Activated CD4-positive, alpha-beta T cell treated with anti-CD3 and anti-CD28 coated beads for 36 hours (primary cell): ENCODE measurements at regions of chr6 and their contacts with region 1.

Region 1: DNA sequence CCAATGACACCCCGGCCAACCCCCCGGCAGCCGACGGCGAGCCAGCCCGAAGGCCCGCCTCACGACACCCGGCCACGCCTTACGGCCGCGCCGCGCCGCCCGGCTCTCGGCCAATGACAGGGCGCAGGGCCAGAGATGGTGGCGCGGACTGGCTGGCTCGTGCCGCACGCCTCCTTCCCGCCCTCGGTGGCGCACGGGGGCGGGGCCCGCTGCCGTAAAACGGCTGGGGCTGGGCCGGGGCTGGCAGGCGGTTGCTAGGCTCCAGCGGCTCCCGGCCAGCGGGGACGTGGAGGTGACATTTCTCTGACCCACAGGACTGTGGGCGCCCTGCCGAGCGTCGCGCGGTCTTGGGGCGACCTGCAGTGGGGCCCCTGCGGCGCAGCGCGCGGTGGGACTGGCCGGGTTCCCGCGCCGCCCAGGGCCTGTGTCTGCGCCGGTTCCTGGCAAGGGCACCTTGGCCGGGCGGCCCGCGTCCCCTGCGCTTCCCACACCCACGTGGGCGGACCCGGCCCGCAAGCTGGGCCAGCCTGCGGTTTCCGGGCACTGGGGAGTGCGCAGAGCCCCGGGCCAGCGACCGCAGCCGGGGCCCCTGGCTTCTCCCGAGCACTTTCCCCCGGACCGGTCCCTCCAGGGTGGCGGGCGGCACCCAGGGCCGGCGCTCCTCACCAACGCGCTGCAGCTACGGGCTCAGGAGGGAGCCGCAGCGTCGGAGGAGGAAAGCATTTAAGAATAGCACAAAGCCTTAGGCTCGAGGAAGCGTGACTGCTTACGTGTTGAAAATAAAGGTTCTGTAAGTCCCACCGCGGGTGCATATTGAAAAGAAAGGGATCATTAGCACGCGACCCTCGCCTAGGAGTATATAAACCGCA is at the start of gene MPC1:
- DNase-seq: peak; percentile 97
- ATAC-seq: peak; percentile 95
- H3K4me3 Mint-ChIP-seq: peak within 1 kb of the TSS; percentile 86
- H3K27ac Mint-ChIP-seq: peak within 1 kb of the TSS; percentile 75
- H3K4me1 Mint-ChIP-seq: peaks cover 4% of the 10 kb centered on the region
- H3K27me3 Mint-ChIP-seq: no peaks in the 10 kb centered on the region
- total RNA-seq, gene MPC1: 17.7 to 20.5 TPM

Region 2: GRCh38 chr6:166266336-166266735 is 116.8 kb before region 1 on chr6:
- CTCF ChIA-PET with region 1: no interaction called
- POLR2A ChIA-PET with region 1: no interaction called
- intact Hi-C with region 1: no loop called
- DNase-seq: no peak
- ATAC-seq: no peak
- H3K4me3 Mint-ChIP-seq: no peak overlapping the region
- H3K27ac Mint-ChIP-seq: no peak overlapping the region
- H3K4me1 Mint-ChIP-seq: no peaks in the 10 kb centered on the region
- H3K27me3 Mint-ChIP-seq: no peaks in the 10 kb centered on the region

Region 3: DNA sequence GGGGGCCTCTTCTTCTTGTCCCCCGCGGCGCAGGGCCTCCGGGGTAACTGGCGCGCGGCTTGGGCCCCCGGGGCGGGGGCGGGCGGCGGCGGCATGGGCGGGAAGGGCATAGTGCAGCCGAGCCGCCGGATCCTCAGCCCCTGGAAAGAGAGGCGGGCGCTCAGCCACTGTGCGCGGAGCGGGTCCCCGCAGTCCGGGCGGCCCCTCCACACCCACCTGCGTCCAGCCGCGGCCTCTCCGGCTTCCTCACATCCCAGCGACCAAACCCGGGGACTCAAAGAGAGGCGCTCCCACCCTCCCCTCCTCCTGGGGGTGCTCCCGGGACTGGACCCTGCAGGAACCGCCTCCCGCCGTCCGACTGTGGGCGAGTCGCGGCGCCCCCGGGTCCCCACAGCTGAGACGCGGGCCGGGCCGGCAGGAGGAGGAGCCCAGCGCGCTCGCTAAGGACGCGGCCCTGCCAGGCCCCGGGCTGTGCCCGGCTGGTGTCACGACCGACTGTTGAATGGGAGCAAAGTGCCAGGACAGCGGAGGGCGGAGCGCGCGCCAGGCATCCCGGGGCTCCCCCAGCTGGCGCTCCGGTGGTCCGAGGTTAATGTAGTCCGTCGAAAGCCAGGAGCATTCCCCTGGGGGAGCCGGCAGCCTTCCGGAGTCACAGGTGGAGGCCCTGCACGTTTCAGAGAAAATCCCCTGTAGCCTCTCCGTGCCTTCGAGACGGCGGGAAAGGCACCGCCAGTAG is 75.0 kb before region 1 on chr6 and contains the start of gene PRR18:
- CTCF ChIA-PET with region 1: interaction called, 27 read pairs
- POLR2A ChIA-PET with region 1: no interaction called
- intact Hi-C with region 1: loop called (anchors 1 kb)
- DNase-seq: peak; percentile 34
- ATAC-seq: peak; percentile 43
- H3K4me3 Mint-ChIP-seq: peak within 1 kb of the TSS; percentile 36
- H3K27ac Mint-ChIP-seq: no peak within 1 kb of the TSS
- H3K4me1 Mint-ChIP-seq: peaks cover 3% of the 10 kb centered on the region
- H3K27me3 Mint-ChIP-seq: peaks cover 27% of the 10 kb centered on the region
- total RNA-seq, gene PRR18: 0.11 TPM in 1 of 2 experiments, not detected in the other

Region 4: GRCh38 chr6:166335378-166336302 is 47.5 kb before region 1 on chr6:
- CTCF ChIA-PET with region 1: interaction called, 11 read pairs
- POLR2A ChIA-PET with region 1: no interaction called
- intact Hi-C with region 1: no loop called
- DNase-seq: no peak
- ATAC-seq: no peak
- H3K4me3 Mint-ChIP-seq: no peak overlapping the region
- H3K27ac Mint-ChIP-seq: peak overlapping the region; percentile 15
- H3K4me1 Mint-ChIP-seq: peaks cover 55% of the 10 kb centered on the region
- H3K27me3 Mint-ChIP-seq: no peaks in the 10 kb centered on the region

Region 5: GRCh38 chr6:166402582-166403277 is 19.6 kb after region 1 on chr6:
- CTCF ChIA-PET with region 1: interaction called, 13 read pairs
- POLR2A ChIA-PET with region 1: no interaction called
- intact Hi-C with region 1: no loop called
- DNase-seq: no peak
- ATAC-seq: no peak
- H3K4me3 Mint-ChIP-seq: no peak overlapping the region
- H3K27ac Mint-ChIP-seq: no peak overlapping the region
- H3K4me1 Mint-ChIP-seq: peaks cover 3% of the 10 kb centered on the region
- H3K27me3 Mint-ChIP-seq: no peaks in the 10 kb centered on the region

Region 6: GRCh38 chr6:166488076-166488685 is 105.0 kb after region 1 on chr6:
- CTCF ChIA-PET with region 1: no interaction called
- POLR2A ChIA-PET with region 1: no interaction called
- intact Hi-C with region 1: loop called in 1 of 2 experiments (anchors 1 kb)
- DNase-seq: peak; percentile 86
- ATAC-seq: peak; percentile 98
- H3K4me3 Mint-ChIP-seq: peak overlapping the region; percentile 65
- H3K27ac Mint-ChIP-seq: peak overlapping the region; percentile 98
- H3K4me1 Mint-ChIP-seq: peaks cover 19% of the 10 kb centered on the region
- H3K27me3 Mint-ChIP-seq: no peaks in the 10 kb centered on the region

Region 7: DNA sequence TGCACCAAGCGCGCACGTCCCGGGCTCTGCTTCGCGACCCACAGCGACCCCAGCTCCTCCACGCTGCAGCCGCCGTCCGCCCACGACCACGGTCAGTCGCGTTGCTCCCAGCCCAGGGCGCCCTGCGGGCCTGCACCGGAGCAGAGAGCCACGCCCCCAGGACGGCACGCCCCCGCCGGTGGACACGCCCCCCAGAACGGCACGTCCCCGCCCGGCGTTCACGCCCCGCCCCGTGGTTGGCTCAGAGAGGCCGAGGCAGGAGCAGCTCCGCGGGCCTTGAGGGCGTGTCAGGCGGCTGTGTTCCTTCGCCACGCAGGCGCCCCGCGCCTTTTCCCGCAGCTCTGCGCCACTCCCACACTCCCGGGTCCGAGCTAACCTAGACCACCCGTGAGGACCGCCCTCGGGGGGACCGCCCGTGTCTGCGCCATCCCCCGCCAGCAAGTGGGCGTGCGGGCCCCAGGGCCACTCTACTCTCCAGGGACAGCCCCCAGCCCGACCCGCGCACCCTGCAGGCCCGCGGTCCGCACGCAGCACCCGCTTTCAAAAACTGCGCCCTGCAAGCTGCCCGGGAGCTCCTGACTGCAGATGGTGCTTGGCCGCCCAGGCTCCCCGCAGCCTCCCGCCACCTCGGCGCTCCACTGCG is 573.4 kb after region 1 on chr6 and contains the start of gene RNASET2:
- CTCF ChIA-PET with region 1: no interaction called
- POLR2A ChIA-PET with region 1: no interaction called
- intact Hi-C with region 1: loop called in 1 of 2 experiments (anchors 1 kb)
- DNase-seq: peak; percentile 100
- ATAC-seq: peak; percentile 80
- H3K4me3 Mint-ChIP-seq: peak within 1 kb of the TSS; percentile 94
- H3K27ac Mint-ChIP-seq: peak within 1 kb of the TSS; percentile 97
- H3K4me1 Mint-ChIP-seq: peaks cover 69% of the 10 kb centered on the region
- H3K27me3 Mint-ChIP-seq: no peaks in the 10 kb centered on the region
- total RNA-seq, gene RNASET2: 68.7 to 85.2 TPM

Region 8: DNA sequence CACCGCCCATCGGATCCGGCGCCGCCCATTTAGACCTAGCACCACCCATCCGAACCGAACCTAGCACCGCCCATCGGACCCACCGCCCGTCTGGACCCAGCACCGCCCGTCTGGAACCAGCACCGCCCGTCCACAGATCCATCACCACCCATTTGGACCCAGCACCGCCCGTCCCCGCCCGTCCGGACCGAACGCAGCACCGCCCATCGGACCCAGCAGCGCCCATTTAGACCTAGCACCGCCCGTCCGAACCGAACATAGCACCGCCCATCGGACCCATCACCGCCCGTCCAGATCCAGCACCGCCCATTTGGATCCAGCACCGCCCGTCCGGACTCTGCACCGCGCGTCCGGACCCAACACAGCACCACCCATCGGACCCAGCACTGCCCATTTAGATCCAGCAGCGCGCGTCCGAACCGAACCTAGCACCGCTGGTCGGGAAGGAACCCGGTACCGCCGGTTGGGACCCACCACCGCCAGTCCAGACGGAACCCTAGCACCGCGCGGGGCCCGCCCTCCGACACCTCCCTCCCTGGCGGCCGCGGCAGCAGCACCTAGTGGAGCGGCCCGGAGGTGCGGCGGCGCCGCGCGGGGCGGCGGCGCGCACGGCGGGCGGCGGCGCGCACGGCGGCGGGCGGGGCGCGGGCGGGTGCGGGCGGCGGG is 1443.2 kb after region 1 on chr6:
- CTCF ChIA-PET with region 1: no interaction called
- POLR2A ChIA-PET with region 1: no interaction called
- intact Hi-C with region 1: loop called in 1 of 2 experiments (anchors 10 kb)
- DNase-seq: peak; percentile 80
- ATAC-seq: peak; percentile 92
- H3K4me3 Mint-ChIP-seq: peak overlapping the region; percentile 76
- H3K27ac Mint-ChIP-seq: peak overlapping the region; percentile 8
- H3K4me1 Mint-ChIP-seq: peaks cover 23% of the 10 kb centered on the region
- H3K27me3 Mint-ChIP-seq: peaks cover 58% of the 10 kb centered on the region